ENCODE measurements at regions of chr1 and their contacts with region 1.

Region 1: DNA sequence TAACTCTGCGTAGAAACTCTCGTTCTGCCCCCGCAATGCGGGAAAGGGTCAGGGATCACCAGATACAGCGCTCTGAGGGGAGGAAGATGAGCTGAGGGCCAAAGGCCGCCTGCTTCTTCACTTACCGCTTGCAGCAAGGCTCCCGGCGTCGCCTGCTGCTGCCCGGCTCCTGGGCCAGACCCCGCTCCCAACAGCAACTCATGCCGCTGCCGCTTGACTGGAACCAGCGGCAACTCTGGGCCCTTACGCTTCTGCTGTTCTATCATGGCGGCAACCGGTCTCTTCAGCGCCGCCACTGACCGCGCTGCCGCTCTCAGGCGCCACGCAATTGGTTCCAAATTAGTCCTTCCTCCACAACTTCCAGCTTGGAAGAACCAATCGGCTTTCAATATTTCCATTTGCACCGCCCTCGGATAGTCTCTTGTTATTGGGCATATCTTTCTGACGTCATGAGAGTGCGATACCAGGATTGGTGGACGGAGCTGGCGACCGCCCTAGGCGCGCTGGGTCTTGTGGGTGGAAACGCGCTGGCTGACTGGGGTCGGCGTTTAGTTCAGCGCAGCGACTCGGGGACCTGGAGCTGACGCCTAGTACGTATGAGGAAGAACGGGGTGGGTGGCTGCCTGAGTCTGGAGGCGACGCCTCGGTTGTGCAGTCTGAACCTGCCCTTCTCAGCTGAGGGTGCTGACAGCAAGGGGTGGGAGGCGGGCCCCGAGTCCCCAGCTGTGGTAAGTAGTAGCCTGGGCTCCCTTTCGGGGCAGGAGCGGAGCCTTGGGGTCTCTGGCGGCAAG is at the starts of genes SNRNP40 and ZCCHC17:
- DNase-seq: peak; percentile 93
- H3K4me3 Mint-ChIP-seq: no peak within 1 kb of the TSS
- H3K27ac Mint-ChIP-seq: no peak within 1 kb of the TSS
- H3K4me1 Mint-ChIP-seq: peaks cover 11% of the 10 kb centered on the region
- H3K27me3 Mint-ChIP-seq: no peaks in the 10 kb centered on the region
- CTCF ChIP-seq: no peak
- total RNA-seq, gene SNRNP40: 78.1 and 81.0 TPM in 2 replicates
- total RNA-seq, gene ZCCHC17: 26.6 and 28.5 TPM in 2 replicates

Region 2: DNA sequence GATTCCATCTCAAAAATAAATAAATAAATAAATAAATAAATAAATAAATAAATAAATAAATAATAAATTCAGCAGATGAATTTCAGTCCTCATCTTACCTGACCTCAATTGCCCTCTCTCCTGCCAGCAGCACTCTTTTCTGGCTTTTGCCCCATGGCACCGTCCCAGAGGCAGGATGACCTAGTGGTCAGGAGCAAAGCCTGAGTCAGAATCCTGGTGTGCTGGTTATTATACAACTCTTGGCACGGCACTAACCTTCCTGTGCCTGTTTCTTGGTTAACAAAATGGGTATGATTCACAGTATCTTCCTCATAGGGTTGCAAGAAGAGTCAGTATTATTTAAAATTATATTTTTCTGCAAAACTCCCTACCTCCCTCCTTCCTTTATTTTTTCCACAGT is 100.0 kb before region 1 on chr1:
- CTCF ChIA-PET with region 1: no interaction called
- intact Hi-C with region 1: loop called (anchors 5 kb)
- DNase-seq: no peak
- H3K4me3 Mint-ChIP-seq: no peak overlapping the region
- H3K27ac Mint-ChIP-seq: no peak overlapping the region
- H3K4me1 Mint-ChIP-seq: no peaks in the 10 kb centered on the region
- H3K27me3 Mint-ChIP-seq: peaks cover 11% of the 10 kb centered on the region
- CTCF ChIP-seq: no peak

Measured in Calu3 (cell line).